Heart left ventricle (tissue), 16 donors: ENCODE measurements at regions of chr18 and their contacts with region 1.

Region 1: DNA sequence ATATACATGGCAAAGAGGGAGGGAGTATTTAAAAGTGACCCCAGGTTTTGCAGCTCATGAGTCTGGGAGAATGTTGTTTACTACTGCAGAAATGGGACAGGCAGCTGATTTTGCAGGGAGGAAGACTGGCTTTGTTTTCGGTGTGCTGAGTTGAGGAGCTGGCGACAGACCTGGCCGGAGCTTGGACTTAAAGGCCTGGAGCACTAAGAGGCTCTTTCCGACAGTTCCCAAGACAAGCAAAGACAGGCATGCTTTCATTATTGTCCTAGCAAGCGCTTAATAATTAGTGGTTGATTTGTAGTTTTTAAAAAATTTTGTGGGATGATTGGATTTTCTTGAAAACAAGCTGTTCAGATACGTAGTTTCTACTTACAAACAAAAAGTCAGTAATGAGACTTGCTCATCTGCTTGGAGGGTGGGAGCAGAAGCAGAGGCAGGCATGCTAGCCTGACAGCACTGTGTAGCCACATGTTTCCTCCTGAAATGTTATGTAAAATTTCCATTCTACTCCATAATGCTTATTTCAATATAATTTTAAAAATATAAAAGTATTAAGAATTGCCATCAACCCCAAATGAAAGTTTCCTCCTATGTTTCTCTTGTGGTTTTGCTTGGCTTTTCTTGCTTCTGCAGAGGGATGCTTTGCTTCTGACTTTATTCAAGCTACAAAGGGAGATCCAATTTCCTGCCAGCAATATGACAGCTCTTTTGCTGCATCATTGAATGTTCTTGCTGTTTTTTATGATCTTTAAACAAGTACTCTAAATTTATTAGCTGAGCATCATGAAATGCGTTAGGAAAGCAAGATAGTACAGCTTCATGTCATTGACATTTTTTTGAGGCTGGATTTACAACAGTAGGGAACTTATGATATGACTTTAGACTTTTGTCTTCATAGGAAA is 75.8 kb downstream of the PHLPP1 start:
- DNase-seq: peak in 1 of 5 donors; percentile 9
- ATAC-seq: peak in 2 of 4 donors; percentile 41 to 45
- H3K4me3 ChIP-seq: peak overlapping the region in 4 of 12 donors; percentile 10 to 23 (median 13)
- H3K27ac ChIP-seq: peak overlapping the region in 3 of 12 donors; percentile 13 to 21 (median 15)
- H3K4me1 ChIP-seq: peaks cover 0 to 21% (median 7%) of the 10 kb centered on the region in 12 donors
- H3K27me3 ChIP-seq: no peaks in the 10 kb centered on the region
- CTCF ChIP-seq: no peak
- POLR2A ChIP-seq: no peak

Region 2: DNA sequence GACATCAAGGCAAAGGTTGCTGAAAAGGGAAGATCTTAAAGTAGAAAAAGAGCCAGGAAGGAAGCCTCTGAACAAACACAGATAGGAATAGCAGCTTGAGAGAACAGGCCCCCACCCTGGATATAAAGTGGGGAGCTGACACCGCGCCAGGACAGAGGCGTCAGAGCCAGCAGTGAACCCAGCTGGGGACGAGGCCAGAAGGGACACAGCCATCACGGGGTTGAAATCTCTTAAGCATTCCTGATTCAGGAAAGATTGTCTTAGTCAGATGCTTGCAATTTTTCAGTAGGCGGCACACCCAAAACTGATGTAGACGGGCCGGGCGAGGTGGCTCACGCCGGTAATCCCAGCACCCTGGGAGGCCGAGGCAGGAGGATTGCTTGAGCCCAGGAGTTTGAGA is 169.6 kb before region 1 on chr18:
- intact Hi-C with region 1: no loop called
- DNase-seq: peak; percentile 61 to 80 (median 75)
- ATAC-seq: peak; percentile 57 to 90 (median 83)
- H3K4me3 ChIP-seq: no peak overlapping the region
- H3K27ac ChIP-seq: peak overlapping the region in 11 of 12 donors; percentile 26 to 80 (median 72)
- H3K4me1 ChIP-seq: peaks cover 0 to 32% (median 11%) of the 10 kb centered on the region in 12 donors
- H3K27me3 ChIP-seq: no peaks in the 10 kb centered on the region
- CTCF ChIP-seq: no peak
- POLR2A ChIP-seq: peak in 1 of 2 donors; percentile 14

Region 3: DNA sequence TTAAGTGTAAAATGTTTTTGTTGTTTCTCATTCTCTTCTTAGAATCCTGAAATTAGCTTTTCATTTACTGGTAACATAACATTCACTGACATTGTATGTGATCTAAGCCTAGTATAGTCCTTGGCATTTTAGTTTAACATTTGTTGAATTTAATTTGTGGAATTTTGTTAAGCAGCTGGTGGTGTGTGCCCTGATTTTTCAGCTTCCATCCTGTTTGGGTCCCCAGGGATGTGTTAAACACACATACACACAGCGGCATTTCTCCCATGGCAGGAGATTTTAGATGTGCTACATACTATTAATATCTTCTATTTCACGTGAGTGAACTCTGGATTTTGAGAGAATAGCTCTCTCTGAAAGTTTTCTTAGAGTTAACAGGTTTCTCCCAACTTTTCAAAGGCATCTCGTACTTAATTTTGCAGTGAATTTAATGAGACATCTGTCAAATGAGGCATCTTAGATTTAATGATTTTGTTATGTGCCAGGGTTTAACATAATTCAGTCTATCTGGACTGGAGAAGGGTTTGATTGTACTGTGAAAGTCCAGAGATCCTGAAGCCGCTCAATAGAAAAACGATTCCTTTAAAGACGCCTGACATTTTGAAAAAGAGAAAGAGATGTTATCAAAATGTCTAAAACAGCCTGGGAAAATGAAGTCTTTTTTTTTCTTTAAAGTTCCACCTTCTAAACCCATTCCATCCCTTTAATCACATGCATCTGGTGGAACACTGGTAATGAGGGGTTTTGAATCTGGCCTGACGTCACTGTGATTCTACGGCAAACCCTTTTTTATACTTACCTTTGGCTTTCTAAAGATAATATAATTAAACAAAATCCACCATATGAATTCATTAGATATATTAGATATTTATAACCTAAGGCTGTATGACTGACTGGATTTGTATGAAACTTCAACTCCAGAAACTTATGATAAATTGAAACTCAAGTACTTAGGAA is 69.0 kb before region 1 on chr18:
- intact Hi-C with region 1: loop called in 4 of 10 experiments (anchors 5 to 10 kb)
- DNase-seq: no peak
- ATAC-seq: peak in 1 of 4 donors; percentile 46
- H3K4me3 ChIP-seq: peak overlapping the region in 5 of 12 donors; percentile 0 to 6 (median 4)
- H3K27ac ChIP-seq: peak overlapping the region in 5 of 12 donors; percentile 1 to 55 (median 14)
- H3K4me1 ChIP-seq: peaks cover 0 to 73% (median 44%) of the 10 kb centered on the region in 12 donors
- H3K27me3 ChIP-seq: no peaks in the 10 kb centered on the region
- CTCF ChIP-seq: no peak
- POLR2A ChIP-seq: no peak